Astrocyte of the cerebellum (primary cell): ENCODE measurements at regions of chr7 and their contacts with region 1.

Region 1: DNA sequence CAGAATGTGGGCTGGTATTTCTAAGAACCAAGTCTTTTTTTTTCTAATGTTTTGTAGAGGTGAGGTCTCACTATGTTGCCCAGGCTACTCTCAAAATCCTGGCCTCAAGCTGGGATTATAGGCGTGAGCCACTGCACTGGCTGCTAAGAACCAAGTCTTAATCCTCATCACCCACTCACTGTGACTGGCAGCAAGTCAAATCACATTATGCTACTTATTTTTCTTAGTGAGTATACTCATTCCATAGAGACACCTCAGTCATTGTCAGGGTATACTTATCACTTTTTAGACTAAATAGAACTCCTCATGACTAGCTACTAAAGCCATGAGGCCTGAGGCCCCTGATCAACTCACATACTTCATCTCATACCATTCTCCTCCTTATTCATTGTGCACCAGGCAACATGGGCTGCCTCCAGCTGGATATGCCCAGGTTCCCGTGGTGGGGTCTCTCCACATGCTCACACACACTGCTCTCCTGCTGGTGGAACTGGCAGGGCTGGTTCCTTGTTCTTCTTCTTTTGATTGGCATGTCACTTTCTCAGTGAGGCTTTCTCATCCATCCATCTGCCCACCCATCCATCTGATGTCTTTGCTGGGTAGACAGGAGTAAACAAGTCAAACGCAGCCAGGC is 116.2 kb downstream of the STRA8 start:
- DNase-seq: no peak
- H3K4me3 ChIP-seq: no peak overlapping the region
- CTCF ChIP-seq: no peak

Region 2: DNA sequence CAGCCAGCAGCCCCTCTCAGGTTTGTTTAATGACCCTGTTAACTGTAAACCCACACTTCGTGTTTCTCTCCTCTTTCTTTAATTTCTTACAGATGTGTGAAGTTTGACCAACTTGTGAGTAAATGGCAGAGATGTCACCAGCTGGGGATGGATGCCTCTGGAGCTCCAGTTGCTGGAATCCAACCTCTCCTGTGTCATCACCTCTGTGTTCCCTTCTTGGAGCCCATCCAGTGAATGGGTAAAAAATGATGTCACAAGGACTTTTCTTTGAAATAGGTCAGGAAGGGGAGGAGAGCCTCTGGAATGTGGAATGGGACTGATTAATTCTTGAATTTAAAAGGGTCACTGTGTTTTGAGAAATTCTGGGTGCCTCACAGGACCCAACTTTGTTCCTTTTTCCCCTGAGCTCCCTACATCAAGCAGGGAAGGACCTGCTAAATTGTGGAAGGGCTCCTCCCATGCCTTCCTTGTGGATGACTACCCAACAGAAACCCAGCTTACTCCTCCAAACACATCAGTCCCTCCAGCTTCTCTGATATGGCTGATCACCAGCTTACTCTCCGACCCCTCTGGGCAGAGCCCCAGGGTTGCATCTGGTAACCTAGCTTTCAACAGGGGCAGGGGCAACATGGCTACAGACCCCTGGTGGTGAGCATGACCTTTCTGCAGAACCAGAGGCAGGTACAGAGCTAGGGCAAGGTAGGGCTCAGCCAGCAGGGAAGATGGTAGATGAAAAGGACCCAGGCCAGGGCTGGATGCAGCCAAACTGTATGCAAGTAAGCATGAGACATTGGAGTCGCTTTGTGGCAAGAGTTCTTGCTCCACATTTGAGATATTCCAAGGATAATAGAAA is 48.7 kb before region 1 on chr7:
- in situ Hi-C with region 1: loop called (anchors 5 kb)
- DNase-seq: no peak
- H3K4me3 ChIP-seq: no peak overlapping the region
- CTCF ChIP-seq: no peak

Region 3: GRCh38 chr7:135397689-135398088 is 47.8 kb after region 1 on chr7:
- in situ Hi-C with region 1: no loop called
- DNase-seq: no peak
- H3K4me3 ChIP-seq: no peak overlapping the region
- CTCF ChIP-seq: no peak